ENCODE measurements at regions of chr6 and their contacts with region 1.

Region 1: GRCh38 chr6:147322299-147323162 is 118.3 kb downstream of the STXBP5 start:
- DNase-seq: peak; percentile 25
- H3K4me3 Mint-ChIP-seq: peak overlapping the region; percentile 28
- H3K27ac Mint-ChIP-seq: peak overlapping the region; percentile 90
- H3K4me1 Mint-ChIP-seq: peaks cover 17% of the 10 kb centered on the region
- H3K27me3 Mint-ChIP-seq: no peaks in the 10 kb centered on the region

Region 2: GRCh38 chr6:147202516-147203312 is 119.8 kb before region 1 on chr6:
- CTCF ChIA-PET with region 1: no interaction called
- POLR2A ChIA-PET with region 1: no interaction called
- intact Hi-C with region 1: loop called (anchors 1 kb)
- DNase-seq: peak; percentile 87
- H3K4me3 Mint-ChIP-seq: peak overlapping the region; percentile 81
- H3K27ac Mint-ChIP-seq: peak overlapping the region; percentile 96
- H3K4me1 Mint-ChIP-seq: peaks cover 21% of the 10 kb centered on the region
- H3K27me3 Mint-ChIP-seq: no peaks in the 10 kb centered on the region

Region 3: GRCh38 chr6:147244832-147245231 is 77.7 kb before region 1 on chr6:
- CTCF ChIA-PET with region 1: no interaction called
- POLR2A ChIA-PET with region 1: no interaction called
- intact Hi-C with region 1: no loop called
- DNase-seq: no peak
- H3K4me3 Mint-ChIP-seq: no peak overlapping the region
- H3K27ac Mint-ChIP-seq: no peak overlapping the region
- H3K4me1 Mint-ChIP-seq: peaks cover 7% of the 10 kb centered on the region
- H3K27me3 Mint-ChIP-seq: no peaks in the 10 kb centered on the region

Region 4: GRCh38 chr6:147279427-147279826 is 43.1 kb before region 1 on chr6:
- CTCF ChIA-PET with region 1: no interaction called
- POLR2A ChIA-PET with region 1: no interaction called
- intact Hi-C with region 1: loop called (anchors 1 kb)
- DNase-seq: no peak
- H3K4me3 Mint-ChIP-seq: no peak overlapping the region
- H3K27ac Mint-ChIP-seq: peak overlapping the region; percentile 83
- H3K4me1 Mint-ChIP-seq: peaks cover 41% of the 10 kb centered on the region
- H3K27me3 Mint-ChIP-seq: no peaks in the 10 kb centered on the region

Region 5: GRCh38 chr6:147384737-147385710 is 62.5 kb after region 1 on chr6:
- CTCF ChIA-PET with region 1: interaction called, 3 read pairs
- POLR2A ChIA-PET with region 1: no interaction called
- intact Hi-C with region 1: loop called (anchors 1 kb)
- DNase-seq: no peak
- H3K4me3 Mint-ChIP-seq: no peak overlapping the region
- H3K27ac Mint-ChIP-seq: peak overlapping the region; percentile 33
- H3K4me1 Mint-ChIP-seq: peaks cover 15% of the 10 kb centered on the region
- H3K27me3 Mint-ChIP-seq: no peaks in the 10 kb centered on the region